Posterior vena cava (tissue), 2 donors: ENCODE measurements at regions of chr17 and their contacts with region 1.

Region 1: GRCh38 chr17:77288100-77288619 is 147.4 kb downstream of the SEC14L1 start:
- DNase-seq: no peak

Region 2: DNA sequence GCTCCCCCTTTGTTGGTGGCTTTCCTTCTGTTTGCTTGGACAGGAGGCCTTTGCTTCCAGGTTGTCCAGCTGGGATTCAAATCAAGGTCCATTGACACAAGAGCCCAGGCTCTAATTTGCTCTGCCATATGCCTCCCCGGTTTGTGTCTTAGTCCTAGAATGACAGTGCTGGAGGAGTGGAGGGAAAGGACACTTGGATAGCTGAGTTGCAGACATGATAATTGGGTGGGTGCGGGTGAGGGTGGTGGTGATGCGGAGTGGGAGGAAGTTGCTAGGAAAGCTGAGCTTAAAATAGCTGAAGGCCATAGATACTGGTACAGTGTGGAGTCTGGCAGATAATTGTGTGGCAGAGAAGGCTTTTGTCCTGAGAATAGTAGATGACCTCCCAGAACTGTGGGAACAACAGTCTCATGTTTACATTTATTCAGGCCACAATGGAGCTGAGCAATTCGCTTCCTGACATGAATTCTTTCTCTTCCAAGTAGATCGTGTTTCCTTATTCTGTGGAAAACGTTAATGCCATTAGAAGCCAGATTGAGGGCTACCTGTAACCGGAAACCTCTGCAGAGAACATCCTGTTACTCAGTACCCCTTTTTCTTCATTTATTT is 123.6 kb before region 1 on chr17:
- intact Hi-C with region 1: no loop called
- DNase-seq: no peak

Region 3: DNA sequence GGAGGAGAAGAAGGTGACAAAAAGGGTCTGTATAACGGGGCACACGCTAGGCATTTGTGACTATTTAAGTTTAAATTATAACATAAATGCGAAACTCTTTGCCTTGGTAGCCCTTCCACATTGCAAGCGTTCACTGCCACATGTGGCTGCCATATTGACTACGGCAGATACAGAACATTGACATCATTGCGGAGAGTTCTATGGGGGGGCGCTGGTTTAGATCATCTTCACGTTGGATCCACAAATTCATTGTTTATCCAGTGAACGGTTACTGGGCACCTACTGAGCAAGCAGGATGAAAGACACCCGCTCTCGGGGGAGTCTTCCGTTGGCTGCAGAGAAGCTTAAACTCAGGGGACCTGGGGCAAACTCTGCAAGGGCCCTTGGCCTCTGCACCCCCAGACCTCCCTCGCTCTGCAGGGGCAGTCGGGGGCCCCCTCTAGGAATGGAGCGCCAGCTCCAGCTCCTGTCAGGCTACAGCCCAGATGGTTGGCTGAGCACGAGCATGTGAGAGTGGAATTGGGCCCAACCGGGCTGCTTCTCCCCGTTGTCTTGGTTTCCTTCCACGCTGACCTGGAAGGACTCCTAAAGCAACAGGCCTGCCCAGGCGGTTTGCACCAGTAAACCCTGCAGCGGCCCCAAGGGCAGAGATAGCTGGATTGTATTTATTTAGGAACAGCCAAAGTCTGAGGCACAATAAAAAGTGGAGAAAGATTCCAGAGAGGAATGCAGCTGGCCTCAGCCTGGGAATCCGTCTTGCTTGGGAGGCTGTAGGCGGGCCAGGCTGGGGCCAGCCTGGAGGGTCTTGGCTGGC is 24.8 kb after region 1 on chr17:
- intact Hi-C with region 1: loop called (anchors 1 to 5 kb)
- DNase-seq: peak; percentile 94